PC-3 (cell line): ENCODE measurements at regions of chr3 and their contacts with region 1.

Region 1: DNA sequence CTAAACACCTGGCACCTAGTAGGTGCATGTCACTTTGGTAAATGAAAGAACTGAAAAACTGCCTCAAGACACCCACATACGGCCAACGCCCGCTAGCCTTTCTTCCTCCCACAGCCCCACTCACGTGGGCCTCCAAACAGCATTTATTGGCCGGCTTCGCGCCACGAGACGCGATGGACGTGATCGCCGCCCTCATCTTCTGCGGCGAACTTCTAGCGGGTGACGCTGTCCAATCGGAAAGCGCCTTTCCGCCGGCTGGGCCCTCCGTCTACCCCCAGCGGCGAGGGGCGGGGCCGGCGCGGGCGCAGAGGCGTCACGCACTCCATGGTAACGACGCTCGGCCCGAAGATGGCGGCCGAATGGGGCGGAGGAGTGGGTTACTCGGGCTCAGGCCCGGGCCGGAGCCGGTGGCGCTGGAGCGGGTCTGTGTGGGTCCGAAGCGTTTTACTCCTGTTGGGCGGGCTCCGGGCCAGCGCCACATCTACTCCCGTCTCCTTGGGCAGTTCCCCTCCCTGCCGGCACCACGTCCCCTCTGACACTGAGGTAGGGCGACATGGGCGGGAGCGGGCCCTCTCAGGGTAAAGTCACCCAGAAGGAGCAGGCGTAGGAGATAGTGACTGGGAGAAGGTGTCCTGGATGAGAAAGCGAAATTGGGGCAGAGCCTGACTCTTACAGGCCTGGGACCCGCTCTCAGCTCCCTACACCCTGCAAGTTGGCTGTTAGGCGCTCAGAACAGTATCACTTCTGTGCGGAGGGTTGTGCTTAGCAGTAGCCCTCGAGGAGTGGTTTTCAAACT is at the start of gene LMLN:
- DNase-seq: peak; percentile 96
- ATAC-seq: peak; percentile 87
- H3K4me3 ChIP-seq: peak within 1 kb of the TSS; percentile 91
- H3K27ac ChIP-seq: peak within 1 kb of the TSS; percentile 68
- H3K4me1 ChIP-seq: peaks cover 22% of the 10 kb centered on the region
- H3K27me3 ChIP-seq: no peaks in the 10 kb centered on the region
- CTCF ChIP-seq: no peak
- total RNA-seq, gene LMLN: 3.7 and 7.5 TPM in 2 replicates

Region 2: DNA sequence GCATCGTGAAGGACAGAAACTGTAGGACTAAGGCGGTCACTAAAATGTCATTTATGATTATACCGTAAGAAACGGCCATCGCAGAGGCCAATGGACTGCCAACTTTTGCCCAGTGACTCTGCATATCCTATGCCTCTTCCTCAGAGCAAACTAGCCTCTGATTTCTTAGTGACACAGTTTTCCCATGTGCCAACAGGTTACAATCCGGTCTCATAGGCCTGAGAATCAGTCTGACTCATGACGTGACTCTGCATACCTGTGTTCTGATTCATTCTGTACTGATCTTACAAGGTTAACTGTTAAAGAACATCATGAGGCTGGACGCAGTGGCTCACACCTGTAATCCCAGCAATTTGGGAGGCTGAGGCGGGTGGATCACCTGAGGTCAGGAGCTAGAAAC is 241.2 kb before region 1 on chr3:
- CTCF ChIA-PET with region 1: no interaction called
- POLR2A ChIA-PET with region 1: no interaction called
- intact Hi-C with region 1: no loop called
- DNase-seq: peak; percentile 99
- ATAC-seq: peak; percentile 99
- H3K4me3 ChIP-seq: no peak overlapping the region
- H3K27ac ChIP-seq: peak overlapping the region; percentile 92
- H3K4me1 ChIP-seq: peaks cover 23% of the 10 kb centered on the region
- H3K27me3 ChIP-seq: no peaks in the 10 kb centered on the region
- CTCF ChIP-seq: no peak

Region 3: GRCh38 chr3:197949754-197950660 is 10.1 kb before region 1 on chr3 and contains the start of gene RPL35A:
- CTCF ChIA-PET with region 1: no interaction called
- POLR2A ChIA-PET with region 1: no interaction called
- intact Hi-C with region 1: loop called (anchors 1 kb)
- DNase-seq: peak; percentile 94
- ATAC-seq: peak; percentile 93
- H3K4me3 ChIP-seq: peak within 1 kb of the TSS; percentile 92
- H3K27ac ChIP-seq: peak within 1 kb of the TSS; percentile 79
- H3K4me1 ChIP-seq: peaks cover 18% of the 10 kb centered on the region
- H3K27me3 ChIP-seq: no peaks in the 10 kb centered on the region
- CTCF ChIP-seq: no peak
- total RNA-seq, gene RPL35A: 766 and 875 TPM in 2 replicates

Region 4: DNA sequence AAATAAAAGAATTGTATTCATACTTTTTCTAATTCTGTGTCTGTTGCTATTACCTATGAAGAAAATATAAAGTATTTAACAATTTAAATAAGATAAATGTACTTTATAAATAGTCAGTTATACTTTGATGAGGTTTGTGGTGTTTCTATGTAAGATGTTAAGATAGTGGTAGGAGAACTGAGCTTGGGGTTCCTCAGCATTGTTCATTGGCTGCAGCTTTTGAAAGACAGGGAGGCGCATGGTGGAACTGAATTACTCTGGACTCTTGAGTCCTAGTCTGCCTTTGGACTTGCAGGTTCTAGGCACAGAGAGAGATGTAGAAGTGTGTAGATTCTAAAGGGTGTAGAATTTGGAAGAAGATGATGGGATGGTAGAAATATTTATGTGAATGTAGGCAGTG is 23.0 kb after region 1 on chr3:
- CTCF ChIA-PET with region 1: interaction called, 4 read pairs
- POLR2A ChIA-PET with region 1: no interaction called
- intact Hi-C with region 1: loop called (anchors 1 kb)
- DNase-seq: no peak
- ATAC-seq: no peak
- H3K4me3 ChIP-seq: no peak overlapping the region
- H3K27ac ChIP-seq: no peak overlapping the region
- H3K4me1 ChIP-seq: no peaks in the 10 kb centered on the region
- H3K27me3 ChIP-seq: no peaks in the 10 kb centered on the region
- CTCF ChIP-seq: no peak